PC-9 (cell line): ENCODE measurements at regions of chr4 and their contacts with region 1.

Region 1: GRCh38 chr4:2165391-2165790 is 76.5 kb downstream of the HAUS3 start:
- DNase-seq: no peak
- H3K4me3 ChIP-seq: no peak overlapping the region
- H3K27ac ChIP-seq: no peak overlapping the region
- H3K4me1 ChIP-seq: peaks cover 2% of the 10 kb centered on the region
- H3K27me3 ChIP-seq: no peaks in the 10 kb centered on the region
- CTCF ChIP-seq: no peak

Region 2: GRCh38 chr4:2071912-2072867 is 93.2 kb before region 1 on chr4:
- CTCF ChIA-PET with region 1: no interaction called
- POLR2A ChIA-PET with region 1: interaction called, 33 read pairs
- intact Hi-C with region 1: no loop called
- DNase-seq: no peak
- H3K4me3 ChIP-seq: no peak overlapping the region
- H3K27ac ChIP-seq: no peak overlapping the region
- H3K4me1 ChIP-seq: no peaks in the 10 kb centered on the region
- H3K27me3 ChIP-seq: no peaks in the 10 kb centered on the region
- CTCF ChIP-seq: no peak